MCF 10A (cell line): ENCODE measurements at regions of chr2 and their contacts with region 1.

Region 1: GRCh38 chr2:112958428-112959108 is 19.2 kb upstream of the IL36G start:
- DNase-seq: peak; percentile 85
- H3K4me3 Mint-ChIP-seq: no peak overlapping the region
- H3K27ac Mint-ChIP-seq: no peak overlapping the region
- H3K4me1 Mint-ChIP-seq: no peaks in the 10 kb centered on the region
- H3K27me3 Mint-ChIP-seq: no peaks in the 10 kb centered on the region
- CTCF ChIP-seq: peak; percentile 69

Region 2: DNA sequence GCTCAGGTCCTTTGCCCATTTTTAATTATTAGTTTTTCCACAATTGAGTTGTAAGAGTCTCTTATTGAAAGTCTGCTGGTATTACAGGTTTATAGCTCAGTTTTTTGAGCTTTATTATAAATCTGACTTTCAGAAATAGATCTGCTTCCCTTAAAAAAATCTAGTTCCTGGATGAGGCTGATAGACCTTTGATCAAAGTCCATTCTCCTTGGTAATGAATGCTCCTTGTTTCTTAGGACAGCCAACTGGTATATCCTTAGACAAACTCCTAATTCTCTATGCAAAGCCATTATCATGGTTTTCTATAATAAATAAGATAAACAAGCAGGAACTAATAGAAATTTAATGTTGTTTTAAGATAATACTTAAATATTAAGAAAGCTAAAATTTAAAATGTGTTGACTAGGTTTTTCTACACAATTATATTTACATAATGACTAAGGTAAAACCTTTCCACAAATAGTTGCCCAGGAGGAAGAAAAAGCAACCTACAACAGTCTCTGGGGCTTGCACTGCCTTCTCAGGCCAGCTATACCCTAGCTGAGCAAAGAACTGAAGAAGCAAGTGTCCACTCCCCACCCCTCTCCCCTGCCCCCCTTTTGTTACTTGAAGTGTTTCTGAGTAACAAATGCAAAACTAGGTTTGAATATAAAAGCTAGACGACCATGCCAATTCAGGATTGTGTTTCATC is 220.9 kb before region 1 on chr2:
- CTCF ChIA-PET with region 1: interaction called, 15 read pairs
- POLR2A ChIA-PET with region 1: no interaction called
- intact Hi-C with region 1: no loop called
- DNase-seq: no peak
- H3K4me3 Mint-ChIP-seq: no peak overlapping the region
- H3K27ac Mint-ChIP-seq: no peak overlapping the region
- H3K4me1 Mint-ChIP-seq: no peaks in the 10 kb centered on the region
- H3K27me3 Mint-ChIP-seq: no peaks in the 10 kb centered on the region
- CTCF ChIP-seq: no peak

Region 3: GRCh38 chr2:112947374-112947773 is 11.2 kb before region 1 on chr2:
- CTCF ChIA-PET with region 1: interaction called, 36 read pairs
- POLR2A ChIA-PET with region 1: interaction called, 4 read pairs
- intact Hi-C with region 1: no loop called
- DNase-seq: no peak
- H3K4me3 Mint-ChIP-seq: no peak overlapping the region
- H3K27ac Mint-ChIP-seq: no peak overlapping the region
- H3K4me1 Mint-ChIP-seq: peaks cover 5% of the 10 kb centered on the region
- H3K27me3 Mint-ChIP-seq: no peaks in the 10 kb centered on the region
- CTCF ChIP-seq: no peak

Region 4: DNA sequence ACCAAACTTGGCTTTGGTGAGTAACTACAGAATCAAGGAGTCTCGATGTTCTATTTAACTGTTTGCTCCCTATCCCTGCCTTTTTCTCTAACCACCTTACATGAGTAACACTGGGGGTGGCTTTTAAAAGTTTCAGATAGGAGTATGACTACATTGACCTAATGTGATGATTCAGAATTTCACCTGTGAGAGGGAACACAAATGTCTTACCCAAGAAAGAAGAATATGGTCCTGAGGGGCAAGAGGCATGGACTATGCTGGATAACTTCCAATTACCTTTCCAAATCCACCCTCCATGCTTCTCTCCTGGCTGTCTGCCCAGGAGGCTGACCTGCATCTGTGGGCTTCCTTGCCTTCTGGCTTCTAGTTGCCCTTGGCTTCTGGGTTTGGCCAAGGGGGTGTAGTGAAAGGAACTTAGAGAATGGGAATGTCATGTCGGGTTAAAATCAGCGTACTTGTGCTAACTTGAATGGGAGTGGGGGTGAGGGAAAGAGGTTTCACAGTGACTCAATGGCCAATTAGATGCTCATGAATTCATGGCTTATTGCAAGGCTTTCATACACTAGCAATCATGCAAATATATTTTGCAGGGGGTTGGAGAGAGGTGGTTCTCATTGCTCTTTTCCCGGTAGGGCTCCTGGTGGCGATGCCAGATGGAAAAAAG is 14.0 kb after region 1 on chr2:
- CTCF ChIA-PET with region 1: interaction called, 10 read pairs
- POLR2A ChIA-PET with region 1: interaction called, 3 read pairs
- intact Hi-C with region 1: no loop called
- DNase-seq: peak; percentile 93
- H3K4me3 Mint-ChIP-seq: no peak overlapping the region
- H3K27ac Mint-ChIP-seq: no peak overlapping the region
- H3K4me1 Mint-ChIP-seq: peaks cover 11% of the 10 kb centered on the region
- H3K27me3 Mint-ChIP-seq: peaks cover 11% of the 10 kb centered on the region
- CTCF ChIP-seq: no peak

Region 5: GRCh38 chr2:113126845-113127645 is 168.5 kb after region 1 on chr2 and contains the start of gene IL1RN:
- CTCF ChIA-PET with region 1: no interaction called
- POLR2A ChIA-PET with region 1: no interaction called
- intact Hi-C with region 1: no loop called
- DNase-seq: no peak
- H3K4me3 Mint-ChIP-seq: no peak within 1 kb of the TSS
- H3K27ac Mint-ChIP-seq: no peak within 1 kb of the TSS
- H3K4me1 Mint-ChIP-seq: peaks cover 15% of the 10 kb centered on the region
- H3K27me3 Mint-ChIP-seq: no peaks in the 10 kb centered on the region
- CTCF ChIP-seq: no peak
- total RNA-seq, gene IL1RN: 0.39 TPM in 1 of 2 replicates, not detected in the other